ENCODE measurements at regions of chr16 and their contacts with region 1.

Region 1: GRCh38 chr16:82229796-82230619 is 60.0 kb upstream of the MPHOSPH6 start:
- H3K4me3 Mint-ChIP-seq: no peak overlapping the region
- H3K27ac Mint-ChIP-seq: no peak overlapping the region
- H3K4me1 Mint-ChIP-seq: peaks cover 7% of the 10 kb centered on the region
- H3K27me3 Mint-ChIP-seq: peaks cover 14% of the 10 kb centered on the region

Region 2: DNA sequence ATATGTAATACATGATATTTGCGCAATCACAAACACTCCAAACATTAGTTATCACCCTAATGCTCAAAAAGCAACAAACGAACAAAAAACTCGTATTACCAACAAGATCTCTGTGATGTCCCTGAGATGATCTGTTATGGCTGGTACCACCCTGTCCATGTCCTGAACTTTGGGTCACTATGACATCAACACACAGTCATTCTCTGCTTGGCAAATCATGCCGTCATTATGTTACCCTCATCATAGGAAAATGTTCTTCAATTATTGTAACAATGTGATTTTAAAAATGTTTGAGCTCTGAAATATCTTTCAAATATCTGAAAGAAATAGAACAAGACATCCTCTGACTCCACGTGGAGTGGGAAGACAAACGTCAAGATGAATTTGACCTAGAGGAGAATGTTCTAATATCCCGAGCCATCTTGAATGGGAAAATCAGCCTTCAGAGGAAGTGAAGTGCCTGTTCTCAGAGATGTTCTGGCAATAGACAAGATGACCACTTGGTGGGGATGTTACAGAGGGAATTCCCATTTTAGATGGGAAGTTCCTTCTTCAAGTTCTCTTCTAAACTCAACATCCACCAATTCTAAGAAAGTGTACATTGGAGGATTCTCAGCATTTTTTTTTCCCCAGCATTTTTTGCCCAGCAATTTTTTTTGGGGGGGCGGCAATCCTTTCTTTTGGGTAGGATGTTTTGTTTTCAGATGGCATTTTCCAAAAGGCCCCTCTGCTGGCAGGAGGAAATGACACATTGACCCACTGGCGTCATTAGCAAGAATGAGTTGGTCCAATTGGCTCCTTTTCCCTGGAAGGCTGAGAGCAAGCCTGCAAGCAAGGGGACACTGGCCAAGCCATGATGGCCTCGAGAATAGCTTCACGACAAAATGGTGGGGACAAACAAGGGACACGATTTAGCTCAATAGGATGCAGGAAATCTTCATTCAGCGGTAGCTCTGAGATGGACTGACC is 198.6 kb before region 1 on chr16:
- intact Hi-C with region 1: loop called (anchors 1 kb)
- H3K4me3 Mint-ChIP-seq: no peak overlapping the region
- H3K27ac Mint-ChIP-seq: no peak overlapping the region
- H3K4me1 Mint-ChIP-seq: no peaks in the 10 kb centered on the region
- H3K27me3 Mint-ChIP-seq: peaks cover 14% of the 10 kb centered on the region

Region 3: DNA sequence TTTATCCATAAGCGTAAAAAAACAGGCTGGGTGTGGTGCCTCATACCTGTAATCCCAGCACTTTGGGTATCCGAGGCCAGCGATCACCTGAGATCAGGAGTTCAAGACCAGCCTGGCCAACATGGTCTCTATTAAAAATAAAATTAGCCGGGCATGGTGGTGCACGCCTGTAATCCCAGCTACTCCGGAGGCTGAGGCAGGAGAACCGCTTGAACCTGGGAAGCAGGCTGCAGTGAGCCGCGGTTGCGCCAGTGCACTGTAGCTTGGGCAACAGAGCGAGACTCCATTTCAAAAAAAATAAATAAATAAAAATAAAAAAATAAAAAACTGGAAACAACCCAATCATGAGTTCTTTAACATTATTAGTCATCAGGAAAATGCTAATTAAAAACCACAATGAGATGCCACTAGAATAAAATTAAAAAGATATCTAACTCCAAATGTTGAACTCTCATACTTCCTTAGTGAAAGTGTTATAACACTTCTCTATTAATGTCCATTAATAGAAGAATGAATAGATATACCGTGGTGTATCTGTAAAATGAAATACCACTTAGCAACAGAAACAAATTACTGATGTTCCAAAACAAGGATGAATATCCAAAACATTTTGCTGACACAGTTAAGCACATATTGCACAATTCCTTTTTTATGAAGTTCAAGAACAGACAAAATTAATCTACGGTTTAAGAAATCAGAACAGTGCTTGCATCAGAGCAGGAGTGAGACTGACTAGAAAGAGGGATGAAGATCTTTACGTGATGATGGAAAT is 73.1 kb before region 1 on chr16:
- intact Hi-C with region 1: loop called (anchors 5 kb)
- H3K4me3 Mint-ChIP-seq: no peak overlapping the region
- H3K27ac Mint-ChIP-seq: no peak overlapping the region
- H3K4me1 Mint-ChIP-seq: peaks cover 14% of the 10 kb centered on the region
- H3K27me3 Mint-ChIP-seq: no peaks in the 10 kb centered on the region

Region 4: DNA sequence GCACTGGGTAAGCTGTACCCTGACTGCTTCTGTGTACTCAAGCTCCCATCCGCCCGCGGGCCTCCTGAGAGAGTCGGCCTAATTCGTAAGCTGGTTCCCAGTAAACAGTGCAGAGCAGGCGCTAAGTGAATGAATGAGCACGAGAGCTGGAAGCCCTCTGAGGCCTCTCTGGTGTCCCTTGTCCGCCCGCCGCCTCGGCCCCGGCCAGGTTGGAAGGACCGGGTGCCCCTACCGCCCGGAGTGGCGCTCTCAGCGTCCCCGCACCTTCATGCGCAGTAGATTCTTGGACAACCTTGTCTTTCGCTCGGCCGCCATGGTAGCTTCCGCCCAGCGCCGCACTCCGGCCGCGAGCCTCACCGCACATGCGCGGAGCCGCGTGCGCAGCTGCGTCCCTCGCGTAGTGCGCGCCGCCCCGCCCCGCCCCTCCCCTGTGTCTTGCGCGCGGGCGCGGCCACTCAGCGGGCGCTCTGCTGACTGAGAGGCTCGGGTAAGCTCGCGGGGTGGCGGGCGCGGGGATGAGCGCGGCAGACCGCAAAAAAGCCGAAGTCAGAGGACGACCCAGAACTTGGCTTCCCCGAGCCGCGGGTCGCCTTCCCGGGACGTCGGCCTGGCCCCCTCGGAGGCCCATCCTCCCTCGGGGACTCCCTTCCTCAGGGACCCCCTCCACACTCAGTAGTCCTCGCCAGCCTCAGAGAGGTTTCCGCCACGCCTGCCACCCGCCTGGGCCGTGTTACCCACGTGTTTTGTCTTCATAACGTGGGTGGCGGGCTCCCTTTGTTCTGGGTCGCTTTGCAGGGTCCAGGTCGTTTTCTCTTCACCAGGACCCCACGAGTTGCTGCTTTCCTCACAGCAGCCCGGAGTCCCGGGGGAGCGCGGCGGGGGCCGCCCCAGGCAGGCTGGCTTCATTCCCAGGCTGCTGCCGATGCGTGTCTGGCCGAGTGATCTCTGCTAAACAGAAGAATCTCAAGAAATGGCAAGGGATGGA is 59.9 kb before region 1 on chr16 and contains the start of gene MPHOSPH6:
- intact Hi-C with region 1: loop called (anchors 5 kb)
- H3K4me3 Mint-ChIP-seq: peak within 1 kb of the TSS; percentile 91
- H3K27ac Mint-ChIP-seq: peak within 1 kb of the TSS; percentile 91
- H3K4me1 Mint-ChIP-seq: peaks cover 34% of the 10 kb centered on the region
- H3K27me3 Mint-ChIP-seq: peaks cover 21% of the 10 kb centered on the region

Region 5: GRCh38 chr16:82653550-82654511 is 423.8 kb after region 1 on chr16:
- intact Hi-C with region 1: no loop called
- H3K4me3 Mint-ChIP-seq: no peak overlapping the region
- H3K27ac Mint-ChIP-seq: no peak overlapping the region
- H3K4me1 Mint-ChIP-seq: no peaks in the 10 kb centered on the region
- H3K27me3 Mint-ChIP-seq: peaks cover 7% of the 10 kb centered on the region